ENCODE measurements at regions of chr22 and their contacts with region 1.

Region 1: GRCh38 chr22:44735540-44736488 is 16.6 kb upstream of the ARHGAP8 start:
- DNase-seq: peak; percentile 82
- H3K4me3 ChIP-seq: no peak overlapping the region
- H3K27ac ChIP-seq: no peak overlapping the region
- H3K4me1 ChIP-seq: no peaks in the 10 kb centered on the region
- H3K27me3 ChIP-seq: peaks cover 7 to 46% (median 9%) of the 10 kb centered on the region in 3 donors
- CTCF ChIP-seq: peak; percentile 78 to 99 (median 96)
- EP300 ChIP-seq: no peak
- POLR2A ChIP-seq: no peak

Region 2: GRCh38 chr22:44697423-44698141 is 38.2 kb before region 1 on chr22:
- intact Hi-C with region 1: loop called (anchors 1 kb)
- DNase-seq: peak; percentile 86
- H3K4me3 ChIP-seq: no peak overlapping the region
- H3K27ac ChIP-seq: peak overlapping the region in 1 of 4 donors; percentile 49
- H3K4me1 ChIP-seq: peaks cover 0 to 31% (median 23%) of the 10 kb centered on the region in 4 donors
- H3K27me3 ChIP-seq: peaks cover 4 to 41% (median 20%) of the 10 kb centered on the region in 3 donors
- CTCF ChIP-seq: peak; percentile 57 to 92 (median 85)
- EP300 ChIP-seq: no peak
- POLR2A ChIP-seq: no peak

Region 3: GRCh38 chr22:44793506-44794172 is 57.8 kb after region 1 on chr22:
- intact Hi-C with region 1: no loop called
- DNase-seq: no peak
- H3K4me3 ChIP-seq: no peak overlapping the region
- H3K27ac ChIP-seq: no peak overlapping the region
- H3K4me1 ChIP-seq: no peaks in the 10 kb centered on the region
- H3K27me3 ChIP-seq: peaks cover 0 to 26% (median 6%) of the 10 kb centered on the region in 3 donors
- CTCF ChIP-seq: no peak
- EP300 ChIP-seq: no peak
- POLR2A ChIP-seq: no peak

Measured in sigmoid colon (tissue), 7 donors.